ENCODE measurements at regions of chr20 and their contacts with region 1.

Region 1: GRCh38 chr20:21505161-21505809 is 8.6 kb downstream of the NKX2-2 start:
- DNase-seq: no peak
- H3K4me3 ChIP-seq: peak overlapping the region; percentile 44
- H3K27me3 ChIP-seq: peaks cover 40% of the 10 kb centered on the region
- CTCF ChIP-seq: peak; percentile 99

Region 2: GRCh38 chr20:20837574-20838021 is 667.7 kb before region 1 on chr20:
- CTCF ChIA-PET with region 1: interaction called, 57 read pairs
- POLR2A ChIA-PET with region 1: no interaction called
- DNase-seq: no peak
- H3K4me3 ChIP-seq: no peak overlapping the region
- H3K27me3 ChIP-seq: no peaks in the 10 kb centered on the region
- CTCF ChIP-seq: peak; percentile 72

Region 3: DNA sequence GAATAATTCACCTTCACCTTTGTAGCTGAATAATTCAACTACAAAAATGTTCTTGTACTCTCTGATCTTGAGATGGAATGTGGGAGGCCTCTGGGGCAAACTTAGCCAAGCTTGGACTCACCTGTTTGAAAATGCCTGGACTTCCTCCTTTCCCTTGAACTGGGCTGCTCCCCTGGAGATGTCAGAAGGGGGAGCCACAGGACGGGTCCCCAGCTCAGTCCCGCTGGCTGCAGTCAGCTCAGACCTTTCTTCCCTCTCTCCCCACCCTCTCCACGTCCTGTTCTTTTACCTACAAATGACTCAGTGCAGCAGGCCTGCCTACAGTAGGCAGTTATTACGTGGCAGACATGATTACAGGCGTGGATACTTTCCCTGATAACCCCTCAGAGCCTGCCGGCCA is 661.3 kb before region 1 on chr20:
- CTCF ChIA-PET with region 1: interaction called, 57 read pairs
- POLR2A ChIA-PET with region 1: no interaction called
- DNase-seq: no peak
- H3K4me3 ChIP-seq: no peak overlapping the region
- H3K27me3 ChIP-seq: no peaks in the 10 kb centered on the region
- CTCF ChIP-seq: no peak

Region 4: GRCh38 chr20:20860078-20860806 is 645.0 kb before region 1 on chr20:
- CTCF ChIA-PET with region 1: interaction called, 52 read pairs
- POLR2A ChIA-PET with region 1: no interaction called
- DNase-seq: peak; percentile 31
- H3K4me3 ChIP-seq: no peak overlapping the region
- H3K27me3 ChIP-seq: no peaks in the 10 kb centered on the region
- CTCF ChIP-seq: peak; percentile 79

Region 5: DNA sequence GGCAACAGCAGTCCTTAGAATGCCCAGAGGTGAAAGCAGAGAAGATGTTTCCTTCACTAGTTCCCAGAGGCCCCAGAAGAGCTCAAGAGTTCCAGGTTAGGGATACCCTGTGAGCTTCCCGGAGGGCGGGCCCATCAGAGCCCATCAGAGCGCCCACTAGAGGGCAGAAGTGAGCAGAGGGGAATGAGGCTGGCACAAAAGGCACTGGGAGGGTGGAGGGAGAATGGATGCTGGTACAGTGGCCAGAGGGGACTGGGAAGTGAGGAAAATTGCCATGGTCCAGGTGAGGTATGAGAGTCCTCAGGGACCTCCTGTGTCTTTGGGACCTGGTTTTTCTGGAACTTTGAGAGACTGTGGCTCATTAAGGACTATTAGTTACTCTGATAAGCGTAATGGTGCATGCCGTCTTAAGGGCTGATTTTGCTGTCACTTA is 456.4 kb before region 1 on chr20:
- CTCF ChIA-PET with region 1: interaction called, 10 read pairs
- POLR2A ChIA-PET with region 1: no interaction called
- DNase-seq: no peak
- H3K4me3 ChIP-seq: no peak overlapping the region
- H3K27me3 ChIP-seq: no peaks in the 10 kb centered on the region
- CTCF ChIP-seq: peak; percentile 72

Region 6: GRCh38 chr20:21228511-21228910 is 276.8 kb before region 1 on chr20:
- CTCF ChIA-PET with region 1: interaction called, 12 read pairs
- POLR2A ChIA-PET with region 1: no interaction called
- DNase-seq: no peak
- H3K4me3 ChIP-seq: no peak overlapping the region
- H3K27me3 ChIP-seq: no peaks in the 10 kb centered on the region
- CTCF ChIP-seq: no peak

Region 7: GRCh38 chr20:21490095-21490494 is 15.2 kb before region 1 on chr20:
- CTCF ChIA-PET with region 1: interaction called, 13 read pairs
- POLR2A ChIA-PET with region 1: no interaction called
- DNase-seq: no peak
- H3K4me3 ChIP-seq: no peak overlapping the region
- H3K27me3 ChIP-seq: peaks cover 3% of the 10 kb centered on the region
- CTCF ChIP-seq: peak; percentile 28; the same call in 1 of the 2 replicates